ENCODE measurements at regions of chr14 and their contacts with region 1.

Region 1: GRCh38 chr14:54931101-54931500 is 28.5 kb upstream of the GCH1 start:
- DNase-seq: no peak
- ATAC-seq: no peak
- H3K4me3 ChIP-seq: no peak overlapping the region
- H3K27ac ChIP-seq: no peak overlapping the region
- H3K4me1 ChIP-seq: no peaks in the 10 kb centered on the region
- H3K27me3 ChIP-seq: no peaks in the 10 kb centered on the region
- CTCF ChIP-seq: no peak

Region 2: GRCh38 chr14:54532111-54533012 is 398.7 kb before region 1 on chr14:
- CTCF ChIA-PET with region 1: no interaction called
- POLR2A ChIA-PET with region 1: no interaction called
- in situ Hi-C with region 1: no loop called
- intact Hi-C with region 1: no loop called
- DNase-seq: no peak
- ATAC-seq: no peak
- H3K4me3 ChIP-seq: no peak overlapping the region
- H3K27ac ChIP-seq: no peak overlapping the region
- H3K4me1 ChIP-seq: no peaks in the 10 kb centered on the region
- H3K27me3 ChIP-seq: no peaks in the 10 kb centered on the region
- CTCF ChIP-seq: no peak

Region 3: DNA sequence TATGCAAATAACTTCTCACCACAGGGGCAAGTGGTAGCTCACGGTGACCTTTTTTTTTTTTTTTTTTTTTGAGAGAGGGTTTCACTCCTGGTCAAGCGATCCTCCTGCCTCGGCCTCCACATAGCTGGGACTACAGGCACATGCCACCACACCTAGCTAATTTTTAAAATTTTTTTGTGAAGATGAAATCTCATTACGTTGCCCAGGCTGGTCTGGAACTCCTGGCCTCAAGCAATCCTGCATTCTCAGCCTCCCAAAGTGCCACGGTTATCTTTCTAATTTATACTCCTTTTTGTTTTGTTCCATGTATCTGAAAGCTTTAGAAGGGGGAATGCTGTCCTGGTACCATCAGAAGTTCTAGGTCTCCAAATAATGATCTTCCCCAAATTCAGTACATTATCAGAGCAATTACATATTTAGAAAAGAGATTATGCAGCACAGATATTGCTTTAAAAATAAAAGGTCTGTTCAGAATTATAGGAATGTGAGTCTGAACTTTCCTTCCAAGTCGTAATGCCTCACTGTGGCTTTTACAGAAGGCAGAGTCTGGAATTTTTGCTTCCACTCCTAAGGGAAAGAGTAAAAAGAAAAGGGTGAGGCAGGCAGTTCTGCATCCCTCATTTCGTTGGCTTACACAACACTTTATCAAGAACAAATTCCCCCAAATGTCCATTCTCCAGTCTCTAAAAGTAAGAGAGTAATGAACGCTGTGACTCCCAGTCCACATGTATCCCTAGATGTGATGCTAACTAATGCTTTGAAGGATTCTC is 101.5 kb before region 1 on chr14:
- CTCF ChIA-PET with region 1: no interaction called
- POLR2A ChIA-PET with region 1: interaction called, 10 read pairs
- in situ Hi-C with region 1: no loop called
- intact Hi-C with region 1: no loop called
- DNase-seq: no peak
- ATAC-seq: no peak
- H3K4me3 ChIP-seq: no peak overlapping the region
- H3K27ac ChIP-seq: no peak overlapping the region
- H3K4me1 ChIP-seq: no peaks in the 10 kb centered on the region
- H3K27me3 ChIP-seq: no peaks in the 10 kb centered on the region; the same call in 1 of the 2 replicates
- CTCF ChIP-seq: no peak

Region 4: GRCh38 chr14:54967496-54967895 is 36.4 kb after region 1 on chr14:
- CTCF ChIA-PET with region 1: no interaction called
- POLR2A ChIA-PET with region 1: interaction called, 16 read pairs
- in situ Hi-C with region 1: no loop called
- intact Hi-C with region 1: no loop called
- DNase-seq: no peak
- ATAC-seq: no peak
- H3K4me3 ChIP-seq: no peak overlapping the region
- H3K27ac ChIP-seq: no peak overlapping the region
- H3K4me1 ChIP-seq: no peaks in the 10 kb centered on the region
- H3K27me3 ChIP-seq: no peaks in the 10 kb centered on the region
- CTCF ChIP-seq: no peak

Region 5: DNA sequence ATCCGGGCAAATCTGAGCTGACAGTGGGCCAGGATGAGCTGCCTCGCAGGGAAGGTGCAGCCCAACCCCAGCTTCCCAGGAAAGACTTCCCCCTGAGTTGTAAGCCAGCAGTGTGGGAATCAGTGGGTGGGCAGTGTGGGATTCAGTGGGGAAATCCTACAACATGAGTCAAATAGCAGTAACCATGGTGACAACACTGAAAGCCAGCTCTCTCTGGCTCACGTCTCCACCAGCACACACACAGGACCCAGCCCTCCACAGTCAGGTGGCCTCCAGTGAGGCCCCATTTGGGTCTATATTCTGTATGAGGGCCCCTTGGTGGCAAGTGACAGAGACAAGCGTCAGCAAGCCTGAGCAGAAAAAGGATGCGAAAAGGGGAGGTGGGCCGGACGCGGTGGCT is 192.0 kb after region 1 on chr14:
- CTCF ChIA-PET with region 1: no interaction called
- POLR2A ChIA-PET with region 1: no interaction called
- in situ Hi-C with region 1: no loop called
- intact Hi-C with region 1: no loop called
- DNase-seq: no peak
- ATAC-seq: no peak
- H3K4me3 ChIP-seq: no peak overlapping the region
- H3K27ac ChIP-seq: peak overlapping the region; percentile 51
- H3K4me1 ChIP-seq: peaks cover 26% of the 10 kb centered on the region
- H3K27me3 ChIP-seq: no peaks in the 10 kb centered on the region
- CTCF ChIP-seq: no peak

Measured in Panc1 (cell line).